Activated naive CD8-positive, alpha-beta T cell treated with anti-CD3 and anti-CD28 coated beads, Interleukin-2, amount 10 ng/mL, durations not matched to agents 7 days and 5 days (primary cell): ENCODE measurements at regions of chr19 and their contacts with region 1.

Region 1: DNA sequence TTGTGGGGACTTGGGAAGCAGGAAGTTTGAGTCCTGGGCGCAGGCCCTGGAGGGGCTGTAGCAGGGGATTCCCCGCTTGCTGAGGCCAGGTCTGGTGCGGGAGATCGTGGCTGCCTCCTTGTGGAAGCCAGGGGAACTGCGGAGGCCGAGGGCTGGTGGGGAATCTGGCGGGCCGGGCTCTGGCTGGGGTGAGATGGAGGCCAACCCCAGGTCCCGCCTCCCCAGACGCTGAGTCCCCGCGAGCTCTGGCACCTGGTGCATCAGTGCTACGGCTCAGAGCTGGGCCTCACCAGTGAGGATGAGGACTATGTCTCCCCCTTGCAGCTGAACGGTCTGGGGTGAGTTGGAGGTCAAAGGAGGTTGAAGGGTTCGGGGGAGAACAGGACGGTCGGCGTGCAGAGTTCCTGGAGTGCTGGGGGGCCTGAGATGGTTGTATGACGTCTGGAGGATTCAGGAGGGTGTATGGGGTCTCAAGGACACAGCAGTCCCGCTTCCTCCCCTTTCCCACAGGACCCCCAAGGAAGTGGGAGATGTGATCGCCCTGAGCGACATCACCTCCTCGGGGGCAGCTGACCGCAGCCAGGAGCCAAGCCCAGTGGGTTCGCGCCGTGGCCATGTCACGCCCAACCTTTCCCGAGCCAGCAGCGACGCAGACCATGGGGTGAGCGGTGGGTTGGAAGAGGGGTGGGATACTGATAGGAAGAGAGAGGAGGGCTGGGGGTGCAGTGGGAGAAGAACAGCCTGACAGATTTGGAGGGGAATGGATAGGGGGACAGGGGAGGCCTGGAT is 13.1 kb downstream of the GRAMD1A start:
- DNase-seq: peak; percentile 86
- ATAC-seq: peak; percentile 61
- H3K4me3 Mint-ChIP-seq: peak overlapping the region; percentile 84
- H3K27ac Mint-ChIP-seq: peak overlapping the region; percentile 91
- H3K4me1 Mint-ChIP-seq: peaks cover 50% of the 10 kb centered on the region
- H3K27me3 Mint-ChIP-seq: no peaks in the 10 kb centered on the region

Region 2: DNA sequence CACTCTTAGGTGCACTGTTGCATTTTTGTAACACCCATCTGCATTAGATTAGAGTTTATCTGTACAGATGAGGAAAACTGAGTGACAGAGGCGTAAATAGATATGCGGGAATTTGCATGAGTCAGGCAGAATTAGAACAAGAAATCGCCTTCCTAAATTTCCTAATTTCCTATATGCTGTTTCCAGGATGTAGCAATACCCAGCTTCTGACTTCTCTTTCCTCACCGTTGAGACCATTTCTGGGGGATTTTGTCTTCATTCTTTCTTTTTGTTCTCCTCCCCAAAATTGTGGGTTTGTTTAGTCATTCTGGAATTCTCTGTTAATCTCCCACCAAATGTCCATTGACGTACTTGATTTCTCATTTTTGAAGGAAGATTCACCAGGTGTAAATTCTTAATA is 38.6 kb before region 1 on chr19:
- POLR2A ChIA-PET with region 1: interaction called, 25 read pairs
- DNase-seq: no peak
- ATAC-seq: no peak
- H3K4me3 Mint-ChIP-seq: no peak overlapping the region
- H3K27ac Mint-ChIP-seq: no peak overlapping the region
- H3K4me1 Mint-ChIP-seq: peaks cover 19% of the 10 kb centered on the region
- H3K27me3 Mint-ChIP-seq: peaks cover 3% of the 10 kb centered on the region

Region 3: DNA sequence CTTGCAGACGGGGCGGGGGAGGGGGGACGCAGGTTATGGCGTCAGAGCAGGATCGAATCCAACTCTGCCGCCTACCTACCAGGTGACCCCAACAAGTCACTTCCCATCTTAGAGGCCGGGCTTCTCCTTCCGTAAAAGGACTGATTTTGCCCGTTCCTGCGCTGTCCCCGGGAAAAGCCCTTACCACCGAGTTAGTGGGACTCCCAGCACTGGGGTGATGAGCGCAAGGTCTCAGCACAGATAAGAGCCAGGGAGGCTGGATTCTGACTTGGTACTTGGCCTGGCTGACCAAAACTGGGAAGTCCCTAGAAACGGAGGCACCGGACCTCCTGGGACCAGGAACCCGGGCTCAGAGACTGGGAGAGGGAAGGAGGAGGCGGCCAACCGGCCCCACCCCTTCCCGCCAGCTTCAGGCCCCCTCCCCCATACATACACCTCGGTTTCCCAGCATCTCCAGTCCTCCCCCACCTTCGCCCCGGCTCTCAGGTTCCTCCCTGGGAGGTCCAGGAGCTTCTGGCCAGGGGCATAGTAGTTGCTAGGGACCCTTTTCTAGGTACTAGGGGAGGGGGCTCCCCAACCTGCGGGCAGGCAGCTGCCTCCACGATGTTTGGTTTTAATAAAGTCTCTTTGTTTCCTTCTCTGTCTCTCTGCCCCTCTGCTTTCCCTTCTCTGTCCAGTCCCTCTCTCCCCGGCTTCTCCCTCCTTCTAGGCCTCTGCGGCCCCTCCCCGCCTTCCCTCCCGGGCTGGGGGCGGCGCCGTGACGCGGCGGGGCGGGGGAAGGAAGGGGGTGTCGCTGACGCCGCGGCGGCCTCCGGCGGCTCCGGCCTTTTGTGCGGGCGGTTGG is 13.5 kb before region 1 on chr19 and contains the start of gene GRAMD1A:
- POLR2A ChIA-PET with region 1: interaction called, 17 read pairs
- DNase-seq: peak; percentile 85
- ATAC-seq: peak; percentile 33
- H3K4me3 Mint-ChIP-seq: peak within 1 kb of the TSS; percentile 91
- H3K27ac Mint-ChIP-seq: peak within 1 kb of the TSS; percentile 95
- H3K4me1 Mint-ChIP-seq: peaks cover 54% of the 10 kb centered on the region
- H3K27me3 Mint-ChIP-seq: no peaks in the 10 kb centered on the region
- total RNA-seq, gene GRAMD1A: 173 to 187 TPM